ENCODE measurements at regions of chr17 and their contacts with region 1.

Region 1: GRCh38 chr17:35242805-35243560 is at the start of gene SLFN5:
- DNase-seq: peak; percentile 87 to 98 (median 94)
- ATAC-seq: peak; percentile 71
- H3K4me3 ChIP-seq: peak within 1 kb of the TSS; percentile 92
- H3K4me3 Mint-ChIP-seq: peak within 1 kb of the TSS; percentile 94
- H3K27ac ChIP-seq: peak within 1 kb of the TSS; percentile 94 to 96
- H3K27ac Mint-ChIP-seq: peak within 1 kb of the TSS; percentile 100
- H3K4me1 ChIP-seq: peaks cover 46% of the 10 kb centered on the region
- H3K4me1 Mint-ChIP-seq: peaks cover 63% of the 10 kb centered on the region
- H3K27me3 ChIP-seq: no peaks in the 10 kb centered on the region
- H3K27me3 Mint-ChIP-seq: no peaks in the 10 kb centered on the region
- CTCF ChIP-seq: no peak
- total RNA-seq, gene SLFN5: 46.7 to 47.0 TPM

Region 2: GRCh38 chr17:34533811-34534527 is 709.0 kb before region 1 on chr17:
- CTCF ChIA-PET with region 1: no interaction called
- POLR2A ChIA-PET with region 1: no interaction called
- intact Hi-C with region 1: no loop called
- DNase-seq: no peak
- ATAC-seq: no peak
- H3K4me3 ChIP-seq: no peak overlapping the region
- H3K4me3 Mint-ChIP-seq: no peak overlapping the region
- H3K27ac ChIP-seq: no peak overlapping the region
- H3K27ac Mint-ChIP-seq: no peak overlapping the region
- H3K4me1 ChIP-seq: no peaks in the 10 kb centered on the region
- H3K4me1 Mint-ChIP-seq: no peaks in the 10 kb centered on the region
- H3K27me3 ChIP-seq: peaks cover 0 to 18% of the 10 kb centered on the region in 2 experiments
- H3K27me3 Mint-ChIP-seq: peaks cover 41% of the 10 kb centered on the region
- CTCF ChIP-seq: no peak

Region 3: GRCh38 chr17:35176897-35177296 is 66.1 kb before region 1 on chr17:
- CTCF ChIA-PET with region 1: interaction called, 7 read pairs
- POLR2A ChIA-PET with region 1: interaction called, 6 read pairs
- intact Hi-C with region 1: loop called in 1 of 2 experiments (anchors 1 kb)
- DNase-seq: no peak
- ATAC-seq: no peak
- H3K4me3 ChIP-seq: no peak overlapping the region
- H3K4me3 Mint-ChIP-seq: no peak overlapping the region
- H3K27ac ChIP-seq: peak overlapping the region in 1 of 2 experiments; percentile 60
- H3K27ac Mint-ChIP-seq: peak overlapping the region; percentile 96
- H3K4me1 ChIP-seq: peaks cover 57% of the 10 kb centered on the region
- H3K4me1 Mint-ChIP-seq: peaks cover 85% of the 10 kb centered on the region
- H3K27me3 ChIP-seq: no peaks in the 10 kb centered on the region
- H3K27me3 Mint-ChIP-seq: no peaks in the 10 kb centered on the region
- CTCF ChIP-seq: no peak

Region 4: DNA sequence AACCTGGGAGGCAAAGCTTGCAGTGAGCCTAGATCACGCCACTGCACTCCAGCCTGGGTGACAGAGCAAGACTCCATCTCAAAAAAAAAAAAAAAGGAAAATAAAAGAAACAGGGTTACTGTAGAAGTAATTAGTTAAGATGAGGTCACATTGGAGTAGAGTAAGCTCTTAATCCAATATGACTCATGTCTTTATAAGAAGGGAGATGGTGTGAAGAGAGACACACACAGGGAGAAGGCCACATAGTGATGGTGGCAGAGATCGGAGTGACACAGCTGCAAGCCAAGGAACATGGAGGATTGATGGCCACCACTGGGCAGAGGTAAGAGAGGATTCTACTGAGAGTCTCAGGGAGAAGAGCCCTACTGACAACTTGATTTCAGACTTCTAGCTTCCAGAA is 15.4 kb before region 1 on chr17:
- CTCF ChIA-PET with region 1: interaction called, 8 read pairs
- POLR2A ChIA-PET with region 1: interaction called, 12 read pairs
- intact Hi-C with region 1: no loop called
- DNase-seq: no peak
- ATAC-seq: no peak
- H3K4me3 ChIP-seq: no peak overlapping the region
- H3K4me3 Mint-ChIP-seq: no peak overlapping the region
- H3K27ac ChIP-seq: no peak overlapping the region
- H3K27ac Mint-ChIP-seq: peak overlapping the region; percentile 32
- H3K4me1 ChIP-seq: peaks cover 11% of the 10 kb centered on the region
- H3K4me1 Mint-ChIP-seq: peaks cover 59% of the 10 kb centered on the region
- H3K27me3 ChIP-seq: no peaks in the 10 kb centered on the region
- H3K27me3 Mint-ChIP-seq: no peaks in the 10 kb centered on the region
- CTCF ChIP-seq: no peak

Region 5: GRCh38 chr17:35273684-35274083 is 30.7 kb after region 1 on chr17:
- CTCF ChIA-PET with region 1: interaction called, 4 read pairs
- POLR2A ChIA-PET with region 1: interaction called, 11 read pairs
- intact Hi-C with region 1: no loop called
- DNase-seq: no peak
- ATAC-seq: no peak
- H3K4me3 ChIP-seq: no peak overlapping the region
- H3K4me3 Mint-ChIP-seq: no peak overlapping the region
- H3K27ac ChIP-seq: no peak overlapping the region
- H3K27ac Mint-ChIP-seq: peak overlapping the region; percentile 89
- H3K4me1 ChIP-seq: peaks cover 21% of the 10 kb centered on the region
- H3K4me1 Mint-ChIP-seq: peaks cover 70% of the 10 kb centered on the region
- H3K27me3 ChIP-seq: no peaks in the 10 kb centered on the region
- H3K27me3 Mint-ChIP-seq: no peaks in the 10 kb centered on the region
- CTCF ChIP-seq: no peak

Region 6: DNA sequence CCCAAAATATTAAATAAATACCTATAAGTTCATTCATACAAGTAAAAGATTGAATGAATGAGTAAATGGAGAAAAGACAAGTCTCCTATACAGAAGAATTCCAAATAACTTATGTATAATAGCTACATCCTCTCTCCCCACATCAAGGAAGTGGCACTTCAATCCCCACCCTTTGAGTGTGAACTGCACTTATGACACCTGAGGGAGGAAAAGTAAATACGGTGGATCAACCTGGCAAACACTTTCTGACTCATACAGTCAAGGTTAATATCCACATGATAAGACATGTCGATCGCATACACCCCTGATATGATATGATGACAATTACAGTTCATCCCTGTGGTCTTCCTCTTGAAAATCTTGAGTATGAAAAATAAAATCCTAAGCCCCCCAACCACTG is 276.5 kb after region 1 on chr17:
- CTCF ChIA-PET with region 1: no interaction called
- POLR2A ChIA-PET with region 1: interaction called, 14 read pairs
- intact Hi-C with region 1: no loop called
- DNase-seq: peak in 2 of 9 experiments; percentile 51 to 71
- ATAC-seq: peak; percentile 32
- H3K4me3 ChIP-seq: no peak overlapping the region
- H3K4me3 Mint-ChIP-seq: peak overlapping the region; percentile 64
- H3K27ac ChIP-seq: peak overlapping the region in 1 of 2 experiments; percentile 77
- H3K27ac Mint-ChIP-seq: peak overlapping the region; percentile 86
- H3K4me1 ChIP-seq: peaks cover 67% of the 10 kb centered on the region
- H3K4me1 Mint-ChIP-seq: peaks cover 93% of the 10 kb centered on the region
- H3K27me3 ChIP-seq: no peaks in the 10 kb centered on the region
- H3K27me3 Mint-ChIP-seq: no peaks in the 10 kb centered on the region
- CTCF ChIP-seq: no peak

Region 7: DNA sequence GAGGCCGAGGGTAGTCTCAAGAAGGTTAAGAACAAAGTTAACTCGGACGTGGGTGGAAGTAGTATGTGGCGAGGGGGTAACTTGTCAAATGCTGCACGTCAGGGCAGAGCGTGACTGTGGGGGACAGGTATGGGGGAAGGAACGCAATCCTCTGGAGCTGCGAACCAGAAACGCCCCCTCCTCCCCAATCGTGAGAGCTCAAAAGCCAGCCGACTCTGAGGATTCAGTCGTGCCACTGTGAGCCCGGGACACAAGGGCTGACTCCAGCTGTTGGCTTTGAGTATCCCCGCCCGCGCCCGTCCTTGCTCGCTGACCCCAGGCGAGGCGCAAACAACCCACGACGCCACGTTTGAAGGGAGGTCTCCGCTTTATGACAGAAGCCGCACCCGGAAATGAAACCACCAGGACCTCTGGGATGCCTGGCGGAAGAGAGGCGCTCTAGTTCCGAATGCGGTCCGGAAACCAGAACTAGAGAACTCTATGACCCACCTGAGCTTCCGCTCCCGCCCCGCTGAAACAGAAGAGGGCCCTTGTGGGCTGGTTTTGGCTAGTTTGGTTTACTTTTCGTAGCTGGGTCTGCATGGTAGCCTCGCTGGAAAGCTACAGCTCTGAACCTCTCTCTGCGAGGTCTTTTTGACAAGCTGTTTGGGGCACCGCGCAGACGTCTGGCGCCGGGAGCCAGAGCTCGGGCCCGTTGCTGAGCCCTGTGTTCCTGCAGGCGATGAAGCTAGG is 335.4 kb after region 1 on chr17 and contains the start of gene PEX12:
- CTCF ChIA-PET with region 1: interaction called, 4 read pairs
- POLR2A ChIA-PET with region 1: interaction called, 10 read pairs
- intact Hi-C with region 1: no loop called
- DNase-seq: peak; percentile 70 to 96 (median 89)
- ATAC-seq: peak; percentile 93
- H3K4me3 ChIP-seq: peak within 1 kb of the TSS; percentile 69 to 88
- H3K4me3 Mint-ChIP-seq: peak within 1 kb of the TSS; percentile 93
- H3K27ac ChIP-seq: peak within 1 kb of the TSS; percentile 88 to 94
- H3K27ac Mint-ChIP-seq: peak within 1 kb of the TSS; percentile 98
- H3K4me1 ChIP-seq: peaks cover 18% of the 10 kb centered on the region
- H3K4me1 Mint-ChIP-seq: peaks cover 29% of the 10 kb centered on the region
- H3K27me3 ChIP-seq: no peaks in the 10 kb centered on the region
- H3K27me3 Mint-ChIP-seq: no peaks in the 10 kb centered on the region
- CTCF ChIP-seq: no peak
- total RNA-seq, gene PEX12: 2.7 to 3.2 TPM

Region 8: GRCh38 chr17:35679007-35679682 is 436.2 kb after region 1 on chr17:
- CTCF ChIA-PET with region 1: no interaction called
- POLR2A ChIA-PET with region 1: no interaction called
- intact Hi-C with region 1: no loop called
- DNase-seq: no peak
- ATAC-seq: no peak
- H3K4me3 ChIP-seq: no peak overlapping the region
- H3K4me3 Mint-ChIP-seq: no peak overlapping the region
- H3K27ac ChIP-seq: no peak overlapping the region
- H3K27ac Mint-ChIP-seq: peak overlapping the region; percentile 43
- H3K4me1 ChIP-seq: no peaks in the 10 kb centered on the region
- H3K4me1 Mint-ChIP-seq: peaks cover 14% of the 10 kb centered on the region
- H3K27me3 ChIP-seq: no peaks in the 10 kb centered on the region
- H3K27me3 Mint-ChIP-seq: no peaks in the 10 kb centered on the region
- CTCF ChIP-seq: no peak

Measured in CD8-positive, alpha-beta T cell (primary cell).